Endothelial cell of umbilical vein (primary cell): ENCODE measurements at regions of chr7 and their contacts with region 1.

Region 1: DNA sequence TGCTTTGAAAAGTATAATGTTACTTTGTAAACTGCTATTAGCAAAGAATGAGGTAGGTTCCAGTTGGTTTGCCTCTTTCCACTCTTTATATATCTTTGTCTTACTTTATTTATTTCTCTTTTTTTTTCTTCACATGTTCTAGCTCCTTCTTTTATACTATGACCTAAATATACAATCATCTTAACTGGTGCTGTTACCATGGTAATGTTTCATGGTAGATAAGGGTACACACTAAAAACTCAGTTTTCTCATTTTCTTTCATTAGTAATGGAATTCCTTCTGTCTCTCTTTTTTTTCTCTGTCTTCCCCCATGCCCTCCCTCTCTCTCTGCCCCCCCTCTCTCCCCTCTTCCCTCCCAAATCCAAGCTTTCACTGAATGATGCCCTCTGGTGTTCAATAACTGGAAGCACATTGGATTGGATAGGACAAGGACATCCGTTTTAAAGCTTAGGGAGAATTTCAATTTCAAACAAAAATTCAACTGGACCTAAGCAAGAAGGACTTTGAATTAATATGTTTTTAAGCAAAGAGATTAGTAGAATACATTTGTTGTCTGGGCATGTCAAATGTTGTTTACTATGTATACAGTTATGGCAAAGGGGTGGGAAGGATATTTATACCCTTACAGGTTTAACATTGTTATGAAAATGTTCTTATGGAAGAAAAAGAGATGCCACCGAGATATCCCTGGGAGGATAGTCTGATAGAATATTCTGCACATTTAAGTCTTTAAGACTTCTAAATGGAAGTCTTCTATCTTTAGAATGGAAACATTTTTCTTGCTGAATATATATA is 6.0 kb downstream of the CHRM2 start:
- DNase-seq: peak; percentile 28
- H3K4me3 ChIP-seq: no peak overlapping the region
- H3K27ac ChIP-seq: no peak overlapping the region
- H3K4me1 ChIP-seq: peaks cover 6% of the 10 kb centered on the region
- H3K27me3 ChIP-seq: peaks cover 39 to 56% of the 10 kb centered on the region in 2 experiments
- CTCF ChIP-seq: peak; percentile 28 to 53
- POLR2A ChIP-seq: no peak

Region 2: DNA sequence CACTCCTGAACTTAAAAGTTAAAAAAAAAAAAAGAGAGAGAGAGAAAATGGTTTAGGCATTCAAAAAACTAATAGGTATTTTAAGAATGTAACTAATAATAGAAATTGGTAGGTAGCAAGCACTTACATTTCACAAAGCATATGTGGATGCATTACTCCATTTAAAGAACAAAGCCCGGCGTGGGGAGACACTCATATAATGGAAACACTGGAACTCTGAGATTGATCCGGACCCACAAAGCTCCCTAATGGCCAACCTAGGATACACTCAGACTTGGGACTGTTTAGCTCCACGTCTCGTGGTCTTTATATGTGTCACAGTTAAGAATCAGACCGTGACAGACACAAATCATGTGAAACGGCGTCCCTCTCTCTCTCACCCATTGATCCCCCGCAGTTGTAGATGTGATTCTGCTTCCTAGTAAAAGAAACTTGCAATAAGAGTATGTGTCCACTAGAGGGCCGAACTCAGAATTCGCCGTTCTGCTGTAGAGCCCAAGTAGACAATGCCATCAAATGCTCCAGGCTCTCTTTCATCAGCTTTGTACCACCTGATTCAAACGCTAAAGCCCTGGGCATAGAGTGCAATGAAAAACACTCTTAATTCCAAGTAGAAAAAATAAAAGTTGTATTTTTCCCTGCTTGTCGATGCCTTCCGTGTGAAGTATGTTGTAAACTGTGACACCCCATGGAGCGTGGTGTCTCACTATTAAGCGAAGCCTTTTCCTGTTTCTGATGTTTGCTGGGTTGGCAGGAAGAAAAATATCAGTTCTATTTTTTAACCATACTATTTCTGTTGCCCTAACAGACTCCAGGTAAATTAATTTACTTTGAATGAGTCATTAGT is 468.3 kb before region 1 on chr7:
- CTCF ChIA-PET with region 1: interaction called, 3 read pairs
- POLR2A ChIA-PET with region 1: no interaction called
- dilution Hi-C with region 1: no loop called
- intact Hi-C with region 1: loop called (anchors 5 kb)
- DNase-seq: peak; percentile 48
- H3K4me3 ChIP-seq: no peak overlapping the region
- H3K27ac ChIP-seq: no peak overlapping the region
- H3K4me1 ChIP-seq: no peaks in the 10 kb centered on the region
- H3K27me3 ChIP-seq: no peaks in the 10 kb centered on the region
- CTCF ChIP-seq: peak; percentile 55 to 67
- POLR2A ChIP-seq: no peak

Region 3: GRCh38 chr7:136857573-136857972 is 16.9 kb before region 1 on chr7:
- CTCF ChIA-PET with region 1: interaction called, 21 read pairs
- POLR2A ChIA-PET with region 1: no interaction called
- dilution Hi-C with region 1: no loop called
- intact Hi-C with region 1: loop called (anchors 2 kb)
- DNase-seq: peak; percentile 51
- H3K4me3 ChIP-seq: no peak overlapping the region
- H3K27ac ChIP-seq: no peak overlapping the region
- H3K4me1 ChIP-seq: peaks cover 14% of the 10 kb centered on the region
- H3K27me3 ChIP-seq: no peaks in the 10 kb centered on the region
- CTCF ChIP-seq: no peak
- POLR2A ChIP-seq: no peak

Region 4: GRCh38 chr7:136925044-136925443 is 50.6 kb after region 1 on chr7:
- CTCF ChIA-PET with region 1: interaction called, 20 read pairs
- POLR2A ChIA-PET with region 1: no interaction called
- dilution Hi-C with region 1: no loop called
- intact Hi-C with region 1: no loop called
- DNase-seq: peak; percentile 93
- H3K4me3 ChIP-seq: peak overlapping the region in 1 of 3 experiments; percentile 43
- H3K27ac ChIP-seq: peak overlapping the region; percentile 70
- H3K4me1 ChIP-seq: peaks cover 30% of the 10 kb centered on the region
- H3K27me3 ChIP-seq: no peaks in the 10 kb centered on the region
- CTCF ChIP-seq: no peak
- POLR2A ChIP-seq: peak; percentile 60

Region 5: GRCh38 chr7:137313201-137313600 is 438.8 kb after region 1 on chr7:
- CTCF ChIA-PET with region 1: no interaction called
- POLR2A ChIA-PET with region 1: no interaction called
- dilution Hi-C with region 1: no loop called
- intact Hi-C with region 1: no loop called
- DNase-seq: no peak
- H3K4me3 ChIP-seq: no peak overlapping the region
- H3K27ac ChIP-seq: no peak overlapping the region
- H3K4me1 ChIP-seq: no peaks in the 10 kb centered on the region
- H3K27me3 ChIP-seq: no peaks in the 10 kb centered on the region
- CTCF ChIP-seq: no peak
- POLR2A ChIP-seq: no peak